Dorsolateral prefrontal cortex (tissue), 120 donors: ENCODE measurements at regions of chr6 and their contacts with region 1.

Region 1: DNA sequence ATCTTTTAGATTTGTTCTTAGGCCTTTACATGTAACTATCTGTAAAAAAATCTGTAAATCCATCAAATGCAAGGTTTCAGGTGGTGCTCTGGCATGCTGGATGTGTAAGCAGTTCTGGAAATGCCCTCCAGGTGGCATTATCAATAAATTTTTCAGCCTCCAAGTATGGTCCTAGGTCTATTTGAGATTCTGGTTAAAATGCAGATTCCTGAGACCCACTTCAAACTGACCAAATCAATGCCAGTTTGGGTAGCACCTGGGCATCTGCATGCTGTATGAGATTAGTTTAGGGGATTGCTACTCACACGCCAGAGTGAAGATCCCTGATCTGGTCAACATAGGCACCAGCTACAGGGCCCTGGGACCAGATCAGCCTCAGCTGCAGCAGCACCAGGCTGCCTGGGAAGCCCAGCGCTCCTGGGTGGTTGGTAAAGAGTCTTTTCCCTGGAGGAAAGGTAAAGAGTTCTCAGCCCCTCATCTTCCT is 507.3 kb upstream of the CITED2 start:
- DNase-seq: peak in 1 of 10 donors; percentile 31
- H3K4me3 ChIP-seq: peak overlapping the region in 5 of 59 donors; percentile 2 to 22 (median 7)
- H3K27ac ChIP-seq: peak overlapping the region in 31 of 59 donors; percentile 2 to 77 (median 47)
- H3K27me3 ChIP-seq: peaks cover 0 to 4% (median 0%) of the 10 kb centered on the region in 45 donors
- CTCF ChIP-seq: peak; percentile 20 to 74 (median 62)

Region 2: GRCh38 chr6:140921366-140922226 is 1039.8 kb after region 1 on chr6:
- intact Hi-C with region 1: loop called in 1 of 2 experiments (anchors 10 kb)
- DNase-seq: no peak
- H3K4me3 ChIP-seq: no peak overlapping the region
- H3K27ac ChIP-seq: no peak overlapping the region
- H3K27me3 ChIP-seq: no peaks in the 10 kb centered on the region
- CTCF ChIP-seq: peak in 54 of 56 donors; percentile 37 to 74 (median 58)